ENCODE measurements at regions of chr13 and their contacts with region 1.

Region 1: DNA sequence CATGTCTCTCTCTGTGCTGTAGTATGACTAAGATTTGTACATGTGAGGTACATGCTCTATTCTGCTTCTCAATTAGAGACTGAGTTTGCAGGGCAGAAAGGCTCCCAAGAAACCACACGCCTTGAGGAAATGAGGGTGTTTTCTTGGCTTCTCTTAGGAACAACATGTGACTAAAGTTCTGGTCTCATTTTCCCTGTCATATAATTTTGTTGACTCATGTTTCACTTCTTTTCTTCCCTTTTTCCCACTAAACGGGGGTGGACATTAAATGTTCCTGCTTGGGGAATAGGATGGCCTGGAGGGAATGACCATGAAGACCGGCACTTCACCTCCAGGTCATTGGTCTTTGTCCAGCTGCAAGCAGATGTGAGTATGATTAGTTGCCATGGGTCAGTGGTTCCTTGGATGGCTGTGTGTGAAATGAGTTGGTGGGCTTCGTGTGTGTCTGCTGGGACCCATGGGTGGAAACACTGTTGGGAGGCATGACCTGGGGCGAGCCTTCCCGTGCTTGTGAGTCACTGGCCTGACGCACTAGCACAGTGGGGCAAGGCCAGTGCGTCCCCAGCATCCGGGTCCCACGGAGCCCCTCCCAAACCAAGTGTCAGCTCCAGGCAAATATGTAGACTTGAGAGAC is 56.6 kb downstream of the COL4A1 start:
- DNase-seq: no peak
- H3K4me3 ChIP-seq: no peak overlapping the region
- H3K27ac ChIP-seq: no peak overlapping the region
- H3K27me3 ChIP-seq: no peaks in the 10 kb centered on the region
- CTCF ChIP-seq: no peak

Region 2: GRCh38 chr13:110047496-110047895 is 202.9 kb before region 1 on chr13:
- CTCF ChIA-PET with region 1: no interaction called
- POLR2A ChIA-PET with region 1: no interaction called
- DNase-seq: peak; percentile 72
- H3K4me3 ChIP-seq: no peak overlapping the region
- H3K27ac ChIP-seq: peak overlapping the region; percentile 11
- H3K27me3 ChIP-seq: no peaks in the 10 kb centered on the region
- CTCF ChIP-seq: no peak

Region 3: GRCh38 chr13:110225609-110226562 is 24.5 kb before region 1 on chr13:
- CTCF ChIA-PET with region 1: interaction called, 10 read pairs
- POLR2A ChIA-PET with region 1: no interaction called
- DNase-seq: no peak
- H3K4me3 ChIP-seq: no peak overlapping the region
- H3K27ac ChIP-seq: peak overlapping the region; percentile 52
- H3K27me3 ChIP-seq: no peaks in the 10 kb centered on the region
- CTCF ChIP-seq: no peak

Region 4: GRCh38 chr13:110233181-110233950 is 17.0 kb before region 1 on chr13:
- CTCF ChIA-PET with region 1: interaction called, 21 read pairs
- POLR2A ChIA-PET with region 1: interaction called, 8 read pairs
- DNase-seq: peak; percentile 67
- H3K4me3 ChIP-seq: peak overlapping the region; percentile 41
- H3K27ac ChIP-seq: peak overlapping the region; percentile 50
- H3K27me3 ChIP-seq: no peaks in the 10 kb centered on the region
- CTCF ChIP-seq: no peak

Region 5: GRCh38 chr13:110239280-110240125 is 10.9 kb before region 1 on chr13:
- CTCF ChIA-PET with region 1: interaction called, 21 read pairs
- POLR2A ChIA-PET with region 1: interaction called, 8 read pairs
- DNase-seq: no peak
- H3K4me3 ChIP-seq: no peak overlapping the region
- H3K27ac ChIP-seq: peak overlapping the region; percentile 21
- H3K27me3 ChIP-seq: no peaks in the 10 kb centered on the region
- CTCF ChIP-seq: no peak

Region 6: GRCh38 chr13:110266984-110267385 is 16.6 kb after region 1 on chr13:
- CTCF ChIA-PET with region 1: interaction called, 10 read pairs
- POLR2A ChIA-PET with region 1: interaction called, 3 read pairs
- DNase-seq: no peak
- H3K4me3 ChIP-seq: no peak overlapping the region
- H3K27ac ChIP-seq: no peak overlapping the region
- H3K27me3 ChIP-seq: no peaks in the 10 kb centered on the region
- CTCF ChIP-seq: no peak

Region 7: DNA sequence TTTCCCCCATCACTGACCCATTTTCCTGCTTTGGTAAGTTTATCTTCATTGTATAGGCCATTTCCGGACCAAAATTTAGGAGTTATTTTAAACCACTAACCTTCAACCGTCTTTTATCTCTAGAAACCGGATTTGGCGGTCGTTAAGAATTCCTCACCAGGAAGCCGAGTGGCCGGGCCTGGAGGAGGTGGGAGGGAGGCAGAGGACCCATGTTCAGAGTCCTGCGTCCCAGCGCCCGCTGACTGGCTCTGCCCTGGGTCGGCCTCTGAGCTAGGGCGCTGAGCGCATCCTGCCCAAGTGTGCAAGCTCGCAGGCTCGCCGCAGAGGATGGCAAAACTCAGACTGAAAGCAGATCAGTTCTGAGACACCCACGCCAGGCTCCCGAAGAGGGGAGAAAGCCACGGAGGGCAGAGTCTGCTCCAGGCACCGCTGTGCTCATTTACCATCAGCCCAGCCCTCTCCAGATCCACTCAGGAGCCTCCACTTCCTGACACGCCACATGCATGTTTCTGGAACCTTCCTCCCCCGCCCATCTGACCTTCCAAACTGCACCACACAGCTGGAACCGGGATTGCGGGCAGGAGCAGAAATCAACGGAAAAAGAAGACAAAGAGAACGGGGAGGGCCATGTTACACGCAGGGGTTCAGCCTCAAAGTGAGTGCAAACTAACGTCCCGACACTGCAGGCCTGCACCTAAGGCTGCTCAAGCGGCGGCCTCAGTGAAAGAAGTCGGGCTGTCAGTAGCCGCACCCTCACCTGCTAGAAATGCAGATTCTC is 48.3 kb after region 1 on chr13:
- CTCF ChIA-PET with region 1: interaction called, 16 read pairs
- POLR2A ChIA-PET with region 1: interaction called, 12 read pairs
- DNase-seq: no peak
- H3K4me3 ChIP-seq: no peak overlapping the region
- H3K27ac ChIP-seq: no peak overlapping the region
- H3K27me3 ChIP-seq: no peaks in the 10 kb centered on the region
- CTCF ChIP-seq: no peak

Region 8: GRCh38 chr13:110306960-110307746 is 56.8 kb after region 1 on chr13 and contains the starts of genes COL4A1 and COL4A2:
- CTCF ChIA-PET with region 1: interaction called, 12 read pairs
- POLR2A ChIA-PET with region 1: interaction called, 10 read pairs
- DNase-seq: no peak
- H3K4me3 ChIP-seq: peak within 1 kb of the TSS; percentile 87
- H3K27ac ChIP-seq: peak within 1 kb of the TSS; percentile 77
- H3K27me3 ChIP-seq: no peaks in the 10 kb centered on the region
- CTCF ChIP-seq: no peak
- polyA plus RNA-seq, gene COL4A1: 206 and 210 TPM in 2 replicates
- polyA plus RNA-seq, gene COL4A2: 208 and 248 TPM in 2 replicates

Measured in AG04450 (cell line).